Mammary epithelial cell (primary cell): ENCODE measurements at regions of chr3 and their contacts with region 1.

Region 1: DNA sequence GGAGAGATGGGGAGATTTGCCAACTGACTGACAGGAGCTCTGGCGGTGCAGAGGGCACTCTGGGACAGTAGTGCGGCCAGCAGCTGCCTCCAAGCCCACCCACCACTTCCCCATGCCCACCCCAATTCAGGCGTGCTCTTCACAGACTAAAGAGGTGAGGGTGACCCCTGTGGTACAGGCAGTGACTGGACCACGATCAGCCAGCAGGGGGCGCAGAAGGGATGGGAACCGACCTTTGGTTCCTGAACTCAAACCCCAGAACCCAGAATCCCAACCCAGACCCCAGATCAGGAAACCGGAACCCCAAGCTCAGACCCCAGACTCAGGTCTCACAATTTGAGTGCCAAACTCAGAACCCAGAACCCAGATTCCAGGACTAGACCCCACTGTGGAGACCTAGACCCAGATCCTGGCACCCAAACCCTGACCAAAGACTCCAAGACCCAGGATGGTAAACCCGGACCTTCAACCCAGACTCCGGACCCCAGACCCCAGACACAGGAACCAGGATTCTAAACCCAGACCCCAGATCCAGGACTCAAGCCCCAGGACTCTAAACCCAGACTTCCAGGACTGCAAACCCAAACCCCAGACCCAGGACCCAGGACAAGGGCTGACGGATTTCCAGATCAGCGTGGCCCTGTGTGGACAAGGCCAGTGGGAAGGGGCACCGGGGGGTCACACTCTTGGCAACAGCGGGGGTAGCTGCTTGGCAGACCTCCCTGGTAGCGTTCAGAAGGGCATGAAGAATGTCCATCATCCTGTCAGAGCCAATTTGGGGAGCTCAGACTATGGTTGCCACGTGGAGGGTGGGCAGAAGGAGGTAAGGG is 3.7 kb upstream of the MYL3 start:
- DNase-seq: peak; percentile 22
- H3K4me3 ChIP-seq: no peak overlapping the region
- H3K27ac ChIP-seq: no peak overlapping the region
- H3K4me1 ChIP-seq: no peaks in the 10 kb centered on the region
- H3K27me3 ChIP-seq: no peaks in the 10 kb centered on the region
- CTCF ChIP-seq: peak; percentile 74 to 95

Region 2: GRCh38 chr3:46909535-46910442 is 42.9 kb after region 1 on chr3:
- CTCF ChIA-PET with region 1: no interaction called
- dilution Hi-C with region 1: no loop called
- in situ Hi-C with region 1: no loop called
- intact Hi-C with region 1: loop called (anchors 1 kb)
- DNase-seq: peak; percentile 65
- H3K4me3 ChIP-seq: no peak overlapping the region
- H3K27ac ChIP-seq: no peak overlapping the region
- H3K4me1 ChIP-seq: peaks cover 21% of the 10 kb centered on the region
- H3K27me3 ChIP-seq: no peaks in the 10 kb centered on the region
- CTCF ChIP-seq: peak; percentile 87 to 88

Region 3: GRCh38 chr3:46923559-46924350 is 56.8 kb after region 1 on chr3:
- CTCF ChIA-PET with region 1: no interaction called
- dilution Hi-C with region 1: no loop called
- in situ Hi-C with region 1: no loop called
- intact Hi-C with region 1: no loop called
- DNase-seq: no peak
- H3K4me3 ChIP-seq: no peak overlapping the region
- H3K27ac ChIP-seq: no peak overlapping the region
- H3K4me1 ChIP-seq: no peaks in the 10 kb centered on the region
- H3K27me3 ChIP-seq: no peaks in the 10 kb centered on the region
- CTCF ChIP-seq: peak; percentile 57 to 72